Heart left ventricle (tissue), 16 donors: ENCODE measurements at regions of chr10 and their contacts with region 1.

Region 1: GRCh38 chr10:32346134-32346550 is 816 bp downstream of the EPC1 start:
- DNase-seq: peak; percentile 97 to 98 (median 97)
- ATAC-seq: peak; percentile 96 to 98 (median 97)
- H3K4me3 ChIP-seq: peak overlapping the region; percentile 64 to 100 (median 88)
- H3K27ac ChIP-seq: peak overlapping the region; percentile 98 to 100 (median 100)
- H3K4me1 ChIP-seq: peaks cover 3 to 73% (median 55%) of the 10 kb centered on the region in 12 donors
- H3K27me3 ChIP-seq: no peaks in the 10 kb centered on the region
- CTCF ChIP-seq: peak; percentile 96 to 99 (median 98)
- POLR2A ChIP-seq: no peak

Region 2: DNA sequence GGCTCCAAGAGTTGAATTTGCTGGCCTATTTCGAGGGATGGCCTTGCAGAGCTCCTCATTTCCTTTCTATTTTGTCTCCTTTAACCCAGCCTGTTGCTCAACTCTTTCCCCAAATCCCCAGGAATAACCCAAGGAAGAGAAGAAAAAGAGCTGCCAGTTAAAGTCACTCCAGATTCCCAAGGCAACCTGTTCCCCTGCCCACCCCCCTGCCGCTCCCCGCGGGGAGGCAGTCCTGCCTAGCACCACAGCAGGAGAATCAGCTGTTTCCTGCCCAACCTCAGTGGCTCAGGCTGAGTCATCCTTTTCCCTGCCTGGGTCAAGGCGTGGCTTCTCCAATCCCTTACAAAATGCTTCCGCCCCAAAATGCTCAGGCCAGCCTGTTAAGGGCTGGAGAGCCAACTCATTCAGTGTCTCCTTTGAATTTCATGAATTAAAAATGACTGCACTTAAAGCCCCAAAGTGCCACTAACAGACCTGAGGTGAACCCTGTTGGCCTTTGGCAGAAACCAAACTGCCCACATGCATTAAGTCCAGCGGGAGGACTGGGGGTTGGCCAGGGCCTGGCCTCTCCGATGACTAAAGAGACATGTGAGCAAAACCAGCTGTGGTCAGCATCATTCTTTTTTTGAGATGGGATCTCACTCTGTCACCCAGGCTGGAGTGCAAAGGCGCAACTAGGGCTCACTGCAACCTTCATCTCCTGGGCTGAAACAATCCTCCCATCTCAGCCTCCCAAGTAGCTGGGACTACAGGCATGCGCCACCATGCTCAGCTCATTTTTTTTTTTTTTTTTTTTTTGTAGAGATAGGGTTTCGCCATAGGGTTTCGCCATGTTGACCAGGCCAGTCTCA is 206.7 kb before region 1 on chr10:
- intact Hi-C with region 1: no loop called
- DNase-seq: peak; percentile 84 to 91 (median 87)
- ATAC-seq: peak; percentile 82 to 98 (median 94)
- H3K4me3 ChIP-seq: no peak overlapping the region
- H3K27ac ChIP-seq: peak overlapping the region in 11 of 12 donors; percentile 47 to 92 (median 71)
- H3K4me1 ChIP-seq: peaks cover 0 to 40% (median 19%) of the 10 kb centered on the region in 12 donors
- H3K27me3 ChIP-seq: no peaks in the 10 kb centered on the region
- CTCF ChIP-seq: peak in 5 of 12 donors; percentile 16 to 39 (median 33)
- POLR2A ChIP-seq: no peak

Region 3: DNA sequence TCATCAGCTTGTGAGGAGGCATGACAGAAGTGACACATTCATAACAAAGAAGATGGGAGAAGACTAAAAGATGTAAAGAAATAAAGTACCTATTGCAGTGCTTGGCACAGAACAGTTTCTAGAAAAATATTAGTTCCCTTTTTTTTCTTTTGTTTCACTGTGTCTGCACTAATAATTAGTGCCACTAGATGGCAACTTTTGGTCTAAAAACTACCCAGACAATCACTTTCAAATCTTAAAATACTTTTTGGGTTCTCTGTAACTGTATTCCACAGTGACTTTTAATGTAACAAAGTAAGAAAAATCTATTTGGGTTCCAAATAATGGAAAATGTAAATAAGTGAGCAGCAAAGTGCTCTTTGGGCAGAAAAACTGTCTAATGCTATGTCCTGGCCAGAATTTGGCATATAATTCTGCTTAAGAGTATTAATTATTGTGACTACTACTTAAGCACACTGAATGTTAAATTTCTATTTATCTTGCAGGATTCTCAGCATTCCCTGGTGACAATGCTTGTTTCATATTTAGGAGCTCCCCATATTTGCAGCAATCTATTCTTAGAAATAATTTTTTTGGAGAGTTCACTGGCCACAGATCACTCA is 155.2 kb before region 1 on chr10:
- intact Hi-C with region 1: loop called in 2 of 10 experiments (anchors 5 to 10 kb)
- DNase-seq: no peak
- ATAC-seq: no peak
- H3K4me3 ChIP-seq: no peak overlapping the region
- H3K27ac ChIP-seq: no peak overlapping the region
- H3K4me1 ChIP-seq: peaks cover 0 to 7% (median 0%) of the 10 kb centered on the region in 12 donors
- H3K27me3 ChIP-seq: no peaks in the 10 kb centered on the region
- CTCF ChIP-seq: peak; percentile 58 to 82 (median 71)
- POLR2A ChIP-seq: no peak

Region 4: GRCh38 chr10:32271617-32272016 is 74.5 kb before region 1 on chr10:
- intact Hi-C with region 1: loop called in 2 of 10 experiments (anchors 5 kb)
- DNase-seq: no peak
- ATAC-seq: peak in 2 of 4 donors; percentile 45
- H3K4me3 ChIP-seq: no peak overlapping the region
- H3K27ac ChIP-seq: no peak overlapping the region
- H3K4me1 ChIP-seq: peaks cover 0 to 17% (median 0%) of the 10 kb centered on the region in 12 donors
- H3K27me3 ChIP-seq: no peaks in the 10 kb centered on the region
- CTCF ChIP-seq: no peak
- POLR2A ChIP-seq: no peak

Region 5: GRCh38 chr10:32314588-32314987 is 31.6 kb before region 1 on chr10:
- intact Hi-C with region 1: loop called in 2 of 10 experiments (anchors 5 kb)
- DNase-seq: no peak
- ATAC-seq: no peak
- H3K4me3 ChIP-seq: no peak overlapping the region
- H3K27ac ChIP-seq: no peak overlapping the region
- H3K4me1 ChIP-seq: peaks cover 20 to 89% (median 79%) of the 10 kb centered on the region in 12 donors
- H3K27me3 ChIP-seq: no peaks in the 10 kb centered on the region
- CTCF ChIP-seq: no peak
- POLR2A ChIP-seq: no peak

Region 6: DNA sequence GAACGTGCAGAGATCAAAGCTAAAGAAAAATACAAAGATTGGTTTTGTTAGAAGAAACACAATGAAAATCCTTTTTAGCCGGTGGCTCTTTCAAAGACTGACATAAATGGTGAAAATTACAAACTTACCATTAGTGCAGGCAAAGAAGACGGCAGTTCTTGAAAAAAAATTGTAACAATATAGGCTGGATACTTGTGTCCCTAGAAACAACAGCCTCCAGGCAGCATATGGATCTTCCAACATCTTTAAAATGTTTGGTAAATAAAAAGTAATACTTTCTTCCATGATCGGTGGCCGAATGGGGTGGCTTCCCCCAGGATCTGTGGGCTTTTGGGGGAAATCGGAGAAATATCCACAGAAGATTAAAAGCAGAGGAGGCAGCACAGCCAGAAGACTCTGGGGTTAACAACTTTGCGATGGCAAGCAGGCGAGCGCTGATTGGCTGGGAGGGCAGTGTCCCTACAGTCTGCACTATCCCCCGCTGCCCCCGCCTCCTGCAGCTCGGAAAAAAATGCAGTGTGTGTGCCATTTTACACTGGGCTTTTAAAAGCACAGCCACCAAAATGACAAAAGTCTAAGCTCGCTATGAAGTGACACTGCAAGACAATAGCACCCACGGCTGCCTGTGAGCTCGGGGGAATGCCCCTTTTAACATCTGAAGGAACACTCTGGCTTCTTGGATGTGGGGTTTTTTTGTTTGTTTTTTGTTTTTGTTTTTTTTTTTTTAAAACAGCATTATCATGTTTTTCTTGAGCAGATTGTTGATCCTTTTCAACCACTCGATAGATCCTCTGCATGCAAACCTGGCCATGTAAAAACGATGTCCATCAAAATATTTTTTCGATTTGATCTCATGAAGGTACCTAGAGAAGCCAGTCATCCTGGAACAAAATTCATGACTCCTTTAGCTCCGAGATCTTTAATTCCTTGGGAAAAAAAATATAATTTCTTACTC is 32.5 kb after region 1 on chr10:
- intact Hi-C with region 1: loop called in 1 of 10 experiments (anchors 2 kb)
- DNase-seq: peak; percentile 95 to 97 (median 96)
- ATAC-seq: peak; percentile 99 to 100 (median 99)
- H3K4me3 ChIP-seq: peak overlapping the region; percentile 35 to 78 (median 69)
- H3K27ac ChIP-seq: peak overlapping the region; percentile 43 to 94 (median 82)
- H3K4me1 ChIP-seq: peaks cover 0 to 31% (median 17%) of the 10 kb centered on the region in 12 donors
- H3K27me3 ChIP-seq: no peaks in the 10 kb centered on the region
- CTCF ChIP-seq: no peak
- POLR2A ChIP-seq: peak in 1 of 2 donors; percentile 36